ENCODE measurements at regions of chr3 and their contacts with region 1.

Region 1: DNA sequence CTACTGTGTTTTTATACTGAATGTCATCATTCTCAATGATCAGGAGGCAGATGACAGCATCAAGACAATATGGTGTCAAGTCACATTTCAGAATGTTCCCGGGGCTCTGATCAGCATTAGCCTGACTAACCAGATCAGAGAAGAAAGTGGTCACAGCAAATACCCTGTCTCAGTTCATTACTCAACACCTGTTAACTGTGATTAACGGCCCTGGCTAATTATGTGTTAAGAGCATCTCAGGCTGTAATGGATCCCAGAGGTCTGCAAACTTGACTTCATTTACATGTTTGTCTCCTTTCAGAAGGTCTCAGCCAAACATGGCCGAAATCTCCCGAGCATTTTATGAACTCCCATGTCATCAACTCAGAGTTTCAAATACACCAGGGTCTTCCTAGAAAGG is 833.7 kb downstream of the FHIT start:
- DNase-seq: no peak
- ATAC-seq: no peak
- H3K4me3 ChIP-seq: no peak overlapping the region
- H3K27ac ChIP-seq: no peak overlapping the region
- H3K4me1 ChIP-seq: no peaks in the 10 kb centered on the region
- H3K27me3 ChIP-seq: no peaks in the 10 kb centered on the region
- CTCF ChIP-seq: no peak
- POLR2A ChIP-seq: no peak
- RAD21 ChIP-seq: no peak

Region 2: GRCh38 chr3:60365360-60365759 is 52.2 kb before region 1 on chr3:
- CTCF ChIA-PET with region 1: no interaction called
- POLR2A ChIA-PET with region 1: no interaction called
- RAD21 ChIA-PET with region 1: no interaction called
- intact Hi-C with region 1: no loop called
- DNase-seq: no peak
- ATAC-seq: no peak
- H3K4me3 ChIP-seq: no peak overlapping the region
- H3K27ac ChIP-seq: no peak overlapping the region
- H3K4me1 ChIP-seq: peaks cover 0 to 3% of the 10 kb centered on the region in 2 experiments; a peak in 2 of 4 replicates
- H3K27me3 ChIP-seq: no peaks in the 10 kb centered on the region
- CTCF ChIP-seq: no peak
- POLR2A ChIP-seq: no peak
- RAD21 ChIP-seq: no peak

Region 3: GRCh38 chr3:60431599-60431958 is 14.0 kb after region 1 on chr3:
- CTCF ChIA-PET with region 1: no interaction called
- POLR2A ChIA-PET with region 1: no interaction called
- RAD21 ChIA-PET with region 1: no interaction called
- intact Hi-C with region 1: loop called (anchors 1 kb)
- DNase-seq: no peak
- ATAC-seq: no peak
- H3K4me3 ChIP-seq: no peak overlapping the region
- H3K27ac ChIP-seq: no peak overlapping the region
- H3K4me1 ChIP-seq: no peaks in the 10 kb centered on the region
- H3K27me3 ChIP-seq: no peaks in the 10 kb centered on the region
- CTCF ChIP-seq: no peak
- POLR2A ChIP-seq: no peak
- RAD21 ChIP-seq: peak; percentile 24; the same call in 1 of the 2 replicates

Measured in HCT116 (cell line).